BJ (cell line): ENCODE measurements at regions of chr9 and their contacts with region 1.

Region 1: GRCh38 chr9:107137495-107138202 is 145.4 kb upstream of the RAD23B start:
- DNase-seq: no peak
- H3K4me3 ChIP-seq: no peak overlapping the region
- H3K27me3 ChIP-seq: peaks cover 4% of the 10 kb centered on the region
- CTCF ChIP-seq: peak; percentile 72

Region 2: GRCh38 chr9:107127602-107128001 is 10.0 kb before region 1 on chr9:
- CTCF ChIA-PET with region 1: interaction called, 20 read pairs
- POLR2A ChIA-PET with region 1: no interaction called
- DNase-seq: no peak
- H3K4me3 ChIP-seq: no peak overlapping the region
- H3K27me3 ChIP-seq: peaks cover 1% of the 10 kb centered on the region; the same call in 1 of the 2 replicates
- CTCF ChIP-seq: no peak

Region 3: DNA sequence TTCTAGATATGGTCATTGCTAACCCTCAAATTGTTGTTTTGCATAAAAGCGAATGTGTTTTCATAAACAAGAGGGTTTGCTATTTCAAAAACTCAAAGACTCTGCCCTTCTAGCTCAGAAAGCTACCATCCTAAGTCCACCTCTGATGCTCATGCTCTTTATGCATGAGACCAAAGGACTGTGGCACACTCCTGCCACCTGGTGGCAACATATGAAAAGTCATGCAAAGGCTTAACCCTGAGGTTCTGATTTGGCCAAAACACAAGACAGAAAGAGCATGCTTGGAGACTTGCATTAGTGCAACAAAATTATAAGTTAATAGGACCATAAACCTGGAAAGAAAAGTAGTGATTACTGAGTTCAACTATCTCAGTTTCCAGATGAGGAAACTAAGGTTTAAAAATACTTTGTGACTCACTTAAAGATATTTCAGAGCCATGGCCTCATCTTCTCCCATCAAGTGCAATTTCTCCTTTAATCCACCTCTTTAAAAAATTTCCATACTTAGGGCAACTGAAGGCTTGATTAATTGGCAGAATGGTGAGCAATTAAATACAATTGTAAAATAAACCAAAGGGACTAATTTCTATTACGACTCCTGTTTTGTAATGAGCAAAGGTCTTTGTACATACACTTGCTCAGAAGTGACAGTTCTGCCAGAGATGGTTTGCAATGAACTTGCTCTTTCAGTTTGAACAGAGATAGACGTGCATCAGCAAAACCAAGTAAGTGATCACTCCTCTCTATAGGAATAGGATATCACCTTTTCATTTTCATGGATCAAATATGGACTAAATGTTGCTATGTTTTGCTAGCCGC is 34.7 kb after region 1 on chr9:
- CTCF ChIA-PET with region 1: interaction called, 11 read pairs
- POLR2A ChIA-PET with region 1: no interaction called
- DNase-seq: peak; percentile 29
- H3K4me3 ChIP-seq: no peak overlapping the region
- H3K27me3 ChIP-seq: no peaks in the 10 kb centered on the region; the same call in 1 of the 2 replicates
- CTCF ChIP-seq: peak; percentile 89